ENCODE measurements at regions of chr18 and their contacts with region 1.

Region 1: GRCh38 chr18:50507120-50507590 is 52.7 kb upstream of the MAPK4 start:
- DNase-seq: peak; percentile 13
- H3K4me3 ChIP-seq: no peak overlapping the region
- H3K27ac ChIP-seq: no peak overlapping the region
- H3K4me1 ChIP-seq: no peaks in the 10 kb centered on the region
- H3K27me3 ChIP-seq: no peaks in the 10 kb centered on the region
- CTCF ChIP-seq: peak; percentile 87 to 99

Region 2: DNA sequence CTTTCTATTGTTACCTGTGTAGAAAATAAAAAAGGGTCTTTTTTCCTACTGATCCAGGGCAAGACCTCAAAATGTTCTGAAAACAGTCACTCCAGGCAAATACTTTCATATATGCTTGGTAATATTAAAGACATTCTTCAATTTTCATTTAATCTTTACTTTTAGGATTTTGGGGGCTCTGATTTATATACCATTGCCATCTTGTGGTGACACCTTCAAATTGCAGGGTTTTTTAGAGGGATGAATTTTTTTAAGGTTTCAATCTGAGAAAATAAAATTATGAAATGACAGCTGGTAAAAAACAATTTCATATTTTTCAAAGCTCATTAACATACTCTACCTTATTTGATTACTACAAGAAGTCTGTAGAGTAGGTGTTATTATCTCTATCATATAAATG is 79.6 kb after region 1 on chr18:
- CTCF ChIA-PET with region 1: no interaction called
- dilution Hi-C with region 1: no loop called
- in situ Hi-C with region 1: no loop called
- intact Hi-C with region 1: loop called (anchors 1 kb)
- DNase-seq: no peak
- H3K4me3 ChIP-seq: no peak overlapping the region
- H3K27ac ChIP-seq: no peak overlapping the region
- H3K4me1 ChIP-seq: no peaks in the 10 kb centered on the region
- H3K27me3 ChIP-seq: no peaks in the 10 kb centered on the region
- CTCF ChIP-seq: peak; percentile 33 to 43

Region 3: DNA sequence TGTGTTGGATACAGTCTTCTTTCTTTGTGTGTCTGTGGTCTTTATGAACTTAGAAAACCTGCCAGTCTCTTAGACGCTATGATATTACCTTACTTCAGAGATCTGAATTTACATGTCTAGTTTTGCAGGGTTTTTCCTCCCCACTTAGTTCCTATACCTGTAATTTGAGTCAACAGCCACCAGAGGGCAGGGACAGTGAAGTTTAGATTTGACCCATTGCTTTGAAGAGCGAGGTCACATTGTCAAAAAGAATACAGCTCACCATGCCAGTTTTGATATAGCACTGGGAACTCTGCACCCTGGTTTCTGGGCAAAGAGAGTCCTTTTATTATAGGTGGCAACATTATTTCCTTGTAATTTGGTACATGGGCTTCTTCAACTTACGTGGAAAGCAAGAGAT is 155.0 kb after region 1 on chr18:
- CTCF ChIA-PET with region 1: no interaction called
- dilution Hi-C with region 1: no loop called
- in situ Hi-C with region 1: no loop called
- intact Hi-C with region 1: loop called (anchors 1 kb)
- DNase-seq: peak; percentile 5
- H3K4me3 ChIP-seq: no peak overlapping the region
- H3K27ac ChIP-seq: no peak overlapping the region
- H3K4me1 ChIP-seq: no peaks in the 10 kb centered on the region
- H3K27me3 ChIP-seq: no peaks in the 10 kb centered on the region
- CTCF ChIP-seq: peak; percentile 32 to 46

Region 4: DNA sequence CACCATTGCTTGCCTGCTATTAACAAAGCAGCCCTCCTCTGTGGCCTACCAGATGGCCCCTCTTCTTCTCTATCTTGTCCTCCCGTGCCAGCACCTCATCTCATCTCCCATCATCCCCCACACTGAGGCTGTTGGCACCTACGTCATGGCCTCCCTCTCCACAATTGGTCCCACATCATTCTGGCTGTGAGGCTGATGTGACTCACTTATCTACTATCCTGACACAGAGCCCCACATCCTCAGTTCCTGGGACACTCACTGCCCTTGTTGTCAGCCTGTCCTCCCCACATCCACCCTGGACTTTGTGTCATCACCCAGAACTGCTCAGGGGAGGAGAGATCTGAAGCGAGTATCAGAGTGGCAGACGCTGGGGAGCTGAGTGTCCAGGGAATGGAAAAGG is 209.7 kb after region 1 on chr18:
- CTCF ChIA-PET with region 1: no interaction called
- dilution Hi-C with region 1: no loop called
- in situ Hi-C with region 1: no loop called
- intact Hi-C with region 1: no loop called
- DNase-seq: no peak
- H3K4me3 ChIP-seq: no peak overlapping the region
- H3K27ac ChIP-seq: no peak overlapping the region
- H3K4me1 ChIP-seq: no peaks in the 10 kb centered on the region
- H3K27me3 ChIP-seq: no peaks in the 10 kb centered on the region
- CTCF ChIP-seq: no peak

Region 5: GRCh38 chr18:50786864-50787263 is 279.7 kb after region 1 on chr18:
- CTCF ChIA-PET with region 1: no interaction called
- dilution Hi-C with region 1: no loop called
- in situ Hi-C with region 1: loop called (anchors 5 to 25 kb)
- intact Hi-C with region 1: loop called (anchors 1 kb)
- DNase-seq: no peak
- H3K4me3 ChIP-seq: no peak overlapping the region
- H3K27ac ChIP-seq: no peak overlapping the region
- H3K4me1 ChIP-seq: no peaks in the 10 kb centered on the region
- H3K27me3 ChIP-seq: peaks cover 2% of the 10 kb centered on the region
- CTCF ChIP-seq: no peak

Region 6: GRCh38 chr18:50819728-50820378 is 312.7 kb after region 1 on chr18 and contains the start of gene MRO:
- CTCF ChIA-PET with region 1: no interaction called
- dilution Hi-C with region 1: no loop called
- in situ Hi-C with region 1: no loop called
- intact Hi-C with region 1: loop called (anchors 1 kb)
- DNase-seq: peak; percentile 46
- H3K4me3 ChIP-seq: peak within 1 kb of the TSS; percentile 35 to 51 (median 45)
- H3K27ac ChIP-seq: no peak within 1 kb of the TSS
- H3K4me1 ChIP-seq: peaks cover 12% of the 10 kb centered on the region
- H3K27me3 ChIP-seq: no peaks in the 10 kb centered on the region
- CTCF ChIP-seq: peak; percentile 96 to 97
- total RNA-seq, gene MRO: not detected

Region 7: GRCh38 chr18:51051105-51051712 is 544.1 kb after region 1 on chr18:
- CTCF ChIA-PET with region 1: no interaction called
- dilution Hi-C with region 1: no loop called
- in situ Hi-C with region 1: loop called in 1 of 2 experiments (anchors 25 kb)
- intact Hi-C with region 1: loop called (anchors 2 kb)
- DNase-seq: peak; percentile 27
- H3K4me3 ChIP-seq: no peak overlapping the region
- H3K27ac ChIP-seq: no peak overlapping the region
- H3K4me1 ChIP-seq: no peaks in the 10 kb centered on the region
- H3K27me3 ChIP-seq: no peaks in the 10 kb centered on the region
- CTCF ChIP-seq: peak; percentile 79 to 83

Measured in mammary epithelial cell (primary cell).